SK-N-SH (cell line): ENCODE measurements at regions of chr9 and their contacts with region 1.

Region 1: GRCh38 chr9:114033397-114034103 is 44.5 kb downstream of the AMBP start:
- DNase-seq: peak; percentile 83
- H3K4me3 ChIP-seq: peak overlapping the region in 1 of 2 experiments; percentile 23; a peak in 1 of 4 replicates
- H3K27ac ChIP-seq: no peak overlapping the region
- H3K4me1 ChIP-seq: no peaks in the 10 kb centered on the region; a peak in 1 of 4 replicates
- H3K27me3 ChIP-seq: no peaks in the 10 kb centered on the region
- CTCF ChIP-seq: peak; percentile 59
- EP300 ChIP-seq: no peak
- RAD21 ChIP-seq: peak; percentile 79

Region 2: DNA sequence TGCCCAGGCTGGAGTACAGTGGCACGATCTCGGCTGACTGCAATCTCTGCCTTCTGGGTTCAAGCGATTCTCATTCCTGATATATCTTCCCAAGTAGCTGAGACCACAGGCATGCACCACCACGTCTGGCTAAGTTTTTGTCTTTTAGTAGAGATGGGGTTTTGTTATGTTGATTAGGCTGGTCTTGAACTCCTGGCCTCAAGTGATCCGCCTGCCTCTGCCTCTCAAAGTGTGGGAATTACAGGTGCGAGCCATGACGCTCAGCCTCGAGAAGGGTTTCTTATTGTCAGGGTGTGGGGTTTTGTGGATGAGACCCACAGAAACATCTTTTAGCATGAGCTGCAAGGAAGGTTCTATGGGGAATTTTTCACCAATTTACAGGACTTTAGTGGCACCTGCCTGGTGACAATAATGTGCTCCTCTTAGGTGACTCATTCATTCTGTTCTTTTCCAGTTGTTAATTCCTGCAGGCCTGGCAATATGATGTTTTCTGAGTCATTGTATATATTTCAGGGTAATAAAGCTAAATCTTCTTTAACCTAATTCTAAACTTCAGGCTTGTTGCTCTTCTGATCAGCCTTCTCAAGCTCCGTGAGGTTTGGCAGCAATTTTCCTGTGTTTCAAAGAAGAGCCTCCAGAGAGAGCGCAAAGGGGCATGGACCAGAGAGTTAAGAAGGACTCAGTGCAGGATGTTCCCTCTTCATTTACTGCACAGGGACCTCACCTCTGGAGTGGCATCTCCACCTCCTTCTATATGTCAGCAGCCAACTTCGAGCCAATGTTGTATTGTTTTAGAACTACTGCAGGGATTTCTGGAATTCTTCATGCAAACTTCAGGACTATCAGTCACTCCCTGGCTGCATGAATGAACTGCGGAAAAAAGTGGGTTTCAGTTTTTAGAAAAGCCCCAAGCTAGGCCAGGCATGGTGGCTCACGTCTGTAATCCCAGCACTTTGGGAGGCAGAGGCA is 235.2 kb before region 1 on chr9:
- CTCF ChIA-PET with region 1: interaction called, 16 read pairs
- POLR2A ChIA-PET with region 1: no interaction called
- DNase-seq: no peak
- H3K4me3 ChIP-seq: no peak overlapping the region
- H3K27ac ChIP-seq: no peak overlapping the region
- H3K4me1 ChIP-seq: no peaks in the 10 kb centered on the region
- H3K27me3 ChIP-seq: 0 out of 2 replicates have a peak, but pooled peaks cover 4% of the 10 kb centered on the region
- CTCF ChIP-seq: no peak
- EP300 ChIP-seq: no peak
- RAD21 ChIP-seq: no peak

Region 3: GRCh38 chr9:114072184-114073140 is 38.9 kb after region 1 on chr9:
- CTCF ChIA-PET with region 1: no interaction called
- POLR2A ChIA-PET with region 1: no interaction called
- DNase-seq: no peak
- H3K4me3 ChIP-seq: no peak overlapping the region
- H3K27ac ChIP-seq: no peak overlapping the region
- H3K4me1 ChIP-seq: no peaks in the 10 kb centered on the region
- H3K27me3 ChIP-seq: peaks cover 7% of the 10 kb centered on the region; the same call in 1 of the 2 replicates
- CTCF ChIP-seq: no peak
- EP300 ChIP-seq: no peak
- RAD21 ChIP-seq: peak; percentile 31

Region 4: GRCh38 chr9:114348906-114349482 is 315.4 kb after region 1 on chr9:
- CTCF ChIA-PET with region 1: no interaction called
- POLR2A ChIA-PET with region 1: no interaction called
- DNase-seq: no peak
- H3K4me3 ChIP-seq: no peak overlapping the region
- H3K27ac ChIP-seq: peak overlapping the region in 1 of 2 experiments; percentile 85; a peak in 2 of 4 replicates
- H3K4me1 ChIP-seq: peaks cover 0 to 15% of the 10 kb centered on the region in 2 experiments; a peak in 3 of 4 replicates
- H3K27me3 ChIP-seq: no peaks in the 10 kb centered on the region
- CTCF ChIP-seq: no peak
- EP300 ChIP-seq: no peak
- RAD21 ChIP-seq: no peak